Transverse colon (tissue), 4 donors: ENCODE measurements at regions of chr5 and their contacts with region 1.

Region 1: DNA sequence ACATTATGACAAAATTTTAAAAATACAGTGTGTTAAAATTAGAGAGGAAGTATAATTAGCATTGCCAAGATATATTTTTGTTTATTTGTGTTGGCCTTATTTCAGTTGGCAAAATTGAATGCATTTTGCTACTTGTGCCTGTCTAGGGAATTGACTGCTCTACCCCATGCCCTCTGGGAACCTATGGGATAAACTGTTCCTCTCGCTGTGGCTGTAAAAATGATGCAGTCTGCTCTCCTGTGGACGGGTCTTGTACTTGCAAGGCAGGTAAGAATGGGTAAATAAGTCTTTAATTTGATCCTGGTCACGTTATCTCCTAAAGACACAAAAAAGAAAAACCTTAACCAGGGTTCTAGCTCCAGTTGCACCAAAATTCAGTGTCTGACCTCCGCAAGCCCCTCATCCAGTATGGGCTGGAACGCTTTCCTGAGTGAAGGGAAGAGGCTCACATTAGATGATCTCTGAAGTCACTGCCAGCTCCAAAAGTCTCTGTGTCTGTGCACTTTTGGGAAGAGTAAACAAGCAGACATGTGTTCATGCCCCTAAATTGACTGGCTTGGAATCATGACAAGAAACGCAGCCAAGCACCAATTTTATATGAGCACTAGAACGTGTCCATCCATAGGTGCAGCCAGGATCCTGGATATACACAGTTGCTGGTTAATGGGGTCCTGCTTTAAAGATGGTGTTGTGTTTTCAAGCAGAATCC is 98.3 kb upstream of the PRRC1 start:
- DNase-seq: no peak
- H3K4me3 ChIP-seq: no peak overlapping the region
- H3K27ac ChIP-seq: no peak overlapping the region
- H3K4me1 ChIP-seq: no peaks in the 10 kb centered on the region
- H3K27me3 ChIP-seq: no peaks in the 10 kb centered on the region
- CTCF ChIP-seq: no peak
- EP300 ChIP-seq: no peak
- POLR2A ChIP-seq: no peak

Region 2: GRCh38 chr5:126754609-126755008 is 664.5 kb before region 1 on chr5:
- in situ Hi-C with region 1: no loop called
- intact Hi-C with region 1: loop called (anchors 5 kb)
- DNase-seq: no peak
- H3K4me3 ChIP-seq: no peak overlapping the region
- H3K27ac ChIP-seq: no peak overlapping the region
- H3K4me1 ChIP-seq: peaks cover 0 to 5% (median 0%) of the 10 kb centered on the region in 4 donors
- H3K27me3 ChIP-seq: no peaks in the 10 kb centered on the region
- CTCF ChIP-seq: no peak
- EP300 ChIP-seq: no peak
- POLR2A ChIP-seq: no peak